Left cardiac atrium (tissue), 4 donors: ENCODE measurements at regions of chr9 and their contacts with region 1.

Region 1: DNA sequence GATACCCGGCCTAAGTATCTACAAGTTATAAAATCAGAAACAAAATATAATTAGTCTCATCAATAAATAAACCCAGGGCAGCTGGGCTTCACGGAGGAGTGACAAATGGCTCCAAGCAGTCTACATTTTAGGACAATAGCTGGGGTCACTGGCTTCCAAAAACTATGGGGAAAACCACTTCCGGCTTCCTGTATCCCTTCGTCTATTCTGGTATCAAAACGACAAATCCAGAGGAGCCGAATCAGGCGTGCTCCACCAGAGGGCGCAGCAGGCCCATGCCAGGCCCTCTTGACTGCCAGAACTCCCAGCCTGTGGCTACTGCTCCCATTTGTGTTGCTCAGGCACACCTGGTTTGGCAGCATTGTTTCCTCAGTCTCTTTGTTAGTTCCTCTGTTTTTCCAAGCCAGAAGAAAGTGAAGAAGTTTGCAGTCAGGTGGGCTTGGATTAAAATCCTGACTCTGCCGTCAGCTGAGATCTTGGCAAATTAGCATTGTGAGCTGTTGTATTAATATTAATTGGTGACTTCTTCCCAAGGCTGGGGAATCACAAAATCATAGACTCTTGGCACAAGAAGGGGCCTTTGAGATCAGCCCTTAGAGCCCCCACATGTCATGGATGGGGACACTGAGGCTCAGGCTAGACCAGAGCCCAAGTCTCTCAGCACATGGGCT is 11.6 kb upstream of the RAB14 start:
- DNase-seq: peak; percentile 89
- ATAC-seq: peak; percentile 95 to 97

Region 2: DNA sequence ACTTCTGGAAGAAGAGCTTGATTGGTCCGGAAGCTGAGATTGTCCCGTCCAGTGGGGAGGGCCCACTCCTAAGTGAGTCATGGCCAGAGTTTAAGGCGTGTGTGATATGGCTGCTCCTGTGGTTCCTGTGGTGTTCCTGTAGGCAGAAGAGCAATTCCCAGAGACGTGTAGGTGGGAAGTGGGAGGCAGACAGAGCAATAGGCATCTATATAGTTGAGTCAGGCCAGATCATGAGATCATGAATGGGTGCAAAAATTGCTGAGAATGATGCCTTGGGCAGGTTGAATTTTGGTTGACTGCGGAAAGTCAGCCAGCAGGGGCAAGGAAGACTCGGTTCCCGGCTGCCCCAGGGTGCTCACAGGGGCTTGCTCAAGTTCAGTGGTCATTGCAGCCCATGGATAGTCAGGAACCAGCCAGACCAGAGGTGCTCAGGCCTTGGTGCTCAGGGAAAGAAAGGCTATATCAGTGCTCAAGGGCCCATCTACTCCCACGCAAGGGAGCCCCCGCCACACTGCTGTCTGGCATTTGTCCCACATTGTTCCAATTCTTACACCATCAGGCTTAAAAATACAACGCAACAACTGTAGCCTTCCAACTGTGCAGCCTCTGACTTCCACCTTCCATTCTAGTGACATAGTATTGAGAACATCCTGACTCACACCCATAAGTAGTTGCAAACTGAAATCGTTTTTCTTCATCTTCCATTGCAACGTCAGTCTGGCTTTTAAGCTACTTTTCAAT is 33.7 kb after region 1 on chr9:
- intact Hi-C with region 1: no loop called
- DNase-seq: peak; percentile 32
- ATAC-seq: peak; percentile 70 to 76

Region 3: GRCh38 chr9:121267689-121268597 is 54.7 kb after region 1 on chr9 and contains the start of gene GSN:
- intact Hi-C with region 1: loop called in 1 of 2 experiments (anchors 5 kb)
- DNase-seq: peak; percentile 86
- ATAC-seq: peak; percentile 93
- total RNA-seq, gene GSN: 881 to 1,287 TPM

Region 4: DNA sequence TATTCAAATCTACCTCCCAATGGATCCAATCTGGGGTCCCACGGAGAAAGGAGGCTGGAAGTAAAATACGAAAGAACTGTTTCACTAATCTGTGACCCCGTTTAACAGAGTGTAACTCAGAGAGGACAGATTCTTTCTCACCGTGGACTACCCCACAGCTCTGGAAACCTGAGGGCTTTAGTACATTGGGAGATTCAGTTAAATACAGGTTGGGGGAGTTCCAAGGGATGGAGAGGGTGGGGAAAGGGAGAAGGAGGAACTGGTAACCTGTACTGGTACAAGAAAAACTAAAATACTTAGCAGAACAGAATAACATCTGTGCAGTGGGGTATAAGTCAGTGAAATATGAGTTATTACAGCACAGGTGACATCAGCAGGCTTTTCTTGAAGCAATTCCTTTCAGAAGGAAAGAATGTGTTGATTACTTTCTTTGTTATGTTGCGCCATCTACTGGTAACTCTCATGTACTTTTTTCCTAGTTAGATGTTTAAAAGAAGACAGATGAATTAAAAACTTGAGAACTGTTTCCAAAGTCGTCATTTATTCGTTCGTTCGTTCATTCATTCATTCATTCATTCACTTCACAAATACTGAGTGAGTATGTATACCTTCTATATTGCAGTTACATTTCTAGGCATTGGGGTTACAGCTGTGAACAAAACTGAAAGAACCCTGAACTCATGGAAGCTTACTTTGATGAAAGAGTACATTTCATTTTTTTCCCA is 186.8 kb after region 1 on chr9:
- intact Hi-C with region 1: loop called (anchors 2 to 5 kb)
- DNase-seq: no peak
- ATAC-seq: peak; percentile 61 to 62